ENCODE measurements at regions of chrX and their contacts with region 1.

Region 1: DNA sequence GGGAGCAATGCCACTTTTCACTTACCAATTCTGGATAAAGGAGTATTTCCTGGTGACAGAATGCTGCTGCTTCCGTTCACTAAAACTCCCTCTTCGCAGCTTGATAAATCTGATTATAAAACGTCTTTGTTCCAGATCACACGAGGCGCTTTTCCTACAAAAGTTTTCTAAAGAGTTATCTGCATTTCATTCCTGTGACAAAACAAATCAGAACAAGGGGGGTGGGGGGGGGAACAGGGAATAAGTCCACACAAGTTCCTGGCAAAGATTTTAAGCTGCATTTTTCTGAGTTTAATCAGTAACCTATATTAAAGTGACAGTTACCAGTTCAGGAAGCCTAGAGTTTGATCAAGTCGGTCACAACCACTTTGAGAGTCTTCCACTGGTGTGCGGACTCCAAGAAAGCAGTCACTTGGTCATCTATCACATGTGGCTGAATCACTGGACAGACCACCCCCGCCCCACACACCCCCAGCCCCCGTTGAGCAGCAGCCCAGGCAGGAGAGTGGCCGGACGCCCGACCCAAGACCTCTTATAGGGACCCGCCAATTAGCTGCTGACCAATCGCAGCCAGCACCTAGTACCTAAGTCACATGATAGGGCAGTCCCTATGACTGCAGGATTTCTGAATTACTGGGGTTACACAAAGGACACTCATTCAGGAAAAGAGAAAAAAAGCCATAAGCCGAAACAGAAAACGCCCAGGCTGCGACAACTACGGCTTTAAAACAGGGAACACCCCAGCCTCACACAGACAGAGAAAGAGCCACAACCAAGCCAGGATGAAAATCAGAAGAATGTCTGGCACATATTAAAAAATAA is 569.3 kb upstream of the DIPK2B start:
- DNase-seq: peak in 3 of 9 donors; percentile 13 to 64 (median 21)
- ATAC-seq: peak; percentile 79
- H3K4me3 ChIP-seq: peak overlapping the region; percentile 71
- H3K4me3 Mint-ChIP-seq: peak overlapping the region; percentile 76 to 95 (median 90)
- H3K27ac ChIP-seq: peak overlapping the region; percentile 76
- H3K27ac Mint-ChIP-seq: peak overlapping the region; percentile 90 to 97 (median 94)
- H3K4me1 ChIP-seq: peaks cover 11 to 45% of the 10 kb centered on the region in 2 donors
- H3K4me1 Mint-ChIP-seq: peaks cover 16 to 68% (median 55%) of the 10 kb centered on the region in 7 donors
- H3K27me3 ChIP-seq: no peaks in the 10 kb centered on the region
- H3K27me3 Mint-ChIP-seq: no peaks in the 10 kb centered on the region

Region 2: DNA sequence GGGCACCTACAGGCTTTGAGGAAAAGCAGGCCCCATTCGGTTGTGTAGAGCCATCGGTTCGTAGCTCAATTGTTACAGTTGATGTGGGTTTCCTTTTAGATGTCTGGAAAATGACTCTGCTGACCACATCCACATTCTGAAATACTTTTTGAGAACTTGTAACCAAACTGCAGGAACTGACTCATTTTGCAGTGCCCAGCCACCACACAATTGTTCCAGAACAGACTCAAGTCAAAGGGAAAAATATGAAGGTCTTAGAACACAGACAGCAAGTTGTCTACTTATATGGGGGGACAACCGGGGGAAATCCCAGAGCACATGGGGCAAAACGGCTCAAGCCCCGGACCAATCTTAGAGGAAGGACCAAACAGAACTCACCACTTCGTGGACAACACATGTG is 11.7 kb before region 1 on chrX:
- CTCF ChIA-PET with region 1: interaction called, 5 read pairs
- POLR2A ChIA-PET with region 1: interaction called, 47 read pairs
- intact Hi-C with region 1: loop called (anchors 1 kb)
- DNase-seq: peak in 2 of 9 donors; percentile 9 to 40
- ATAC-seq: peak; percentile 47
- H3K4me3 ChIP-seq: peak overlapping the region; percentile 29
- H3K4me3 Mint-ChIP-seq: peak overlapping the region in 9 of 10 donors; percentile 62 to 84 (median 70)
- H3K27ac ChIP-seq: peak overlapping the region; percentile 31
- H3K27ac Mint-ChIP-seq: peak overlapping the region in 8 of 9 donors; percentile 49 to 93 (median 72)
- H3K4me1 ChIP-seq: peaks cover 31 to 67% of the 10 kb centered on the region in 2 donors
- H3K4me1 Mint-ChIP-seq: peaks cover 28 to 67% (median 45%) of the 10 kb centered on the region in 7 donors
- H3K27me3 ChIP-seq: no peaks in the 10 kb centered on the region
- H3K27me3 Mint-ChIP-seq: no peaks in the 10 kb centered on the region

Region 3: GRCh38 chrX:45781901-45782553 is 12.1 kb after region 1 on chrX:
- CTCF ChIA-PET with region 1: no interaction called
- POLR2A ChIA-PET with region 1: no interaction called
- intact Hi-C with region 1: loop called (anchors 1 to 2 kb)
- DNase-seq: no peak
- ATAC-seq: peak; percentile 37
- H3K4me3 ChIP-seq: no peak overlapping the region
- H3K4me3 Mint-ChIP-seq: no peak overlapping the region
- H3K27ac ChIP-seq: no peak overlapping the region
- H3K27ac Mint-ChIP-seq: peak overlapping the region in 1 of 9 donors; percentile 62
- H3K4me1 ChIP-seq: no peaks in the 10 kb centered on the region
- H3K4me1 Mint-ChIP-seq: peaks cover 0 to 73% (median 4%) of the 10 kb centered on the region in 7 donors
- H3K27me3 ChIP-seq: no peaks in the 10 kb centered on the region
- H3K27me3 Mint-ChIP-seq: no peaks in the 10 kb centered on the region

Region 4: DNA sequence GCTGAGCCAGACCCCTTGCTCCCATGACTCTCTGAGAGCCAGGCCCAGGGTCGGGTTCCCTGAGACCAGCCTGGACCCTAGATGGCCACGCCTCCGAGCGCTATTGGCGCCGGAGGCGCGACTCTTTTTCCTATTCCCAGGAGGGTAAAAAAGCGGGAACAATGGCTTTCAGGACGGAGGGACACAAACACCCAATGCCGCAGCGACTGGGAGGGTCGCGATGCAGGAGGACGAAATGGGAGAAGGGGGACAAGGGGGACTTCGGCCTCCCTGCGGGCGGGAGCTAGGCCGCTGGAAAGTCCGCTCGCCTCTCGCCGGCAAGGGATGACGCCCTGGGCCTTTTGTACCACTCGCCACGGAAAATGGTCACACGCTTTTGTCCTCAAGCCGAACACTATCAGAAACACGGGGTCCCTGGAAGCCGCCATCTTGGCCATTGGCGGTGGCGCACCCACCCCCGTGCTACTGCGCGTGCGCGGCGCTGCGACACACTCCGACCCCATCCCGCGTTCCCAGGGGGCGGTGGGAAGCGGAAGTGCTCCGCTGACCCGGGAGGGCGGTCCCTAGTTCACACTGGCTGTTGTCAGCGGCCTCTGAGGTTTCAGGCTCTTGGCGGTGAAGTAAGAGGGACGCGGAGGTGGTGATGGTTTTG is 676.9 kb after region 1 on chrX:
- CTCF ChIA-PET with region 1: no interaction called
- POLR2A ChIA-PET with region 1: no interaction called
- intact Hi-C with region 1: no loop called
- DNase-seq: peak; percentile 75 to 86 (median 81)
- ATAC-seq: peak; percentile 94
- H3K4me3 ChIP-seq: peak overlapping the region; percentile 83
- H3K4me3 Mint-ChIP-seq: peak overlapping the region; percentile 77 to 91 (median 85)
- H3K27ac ChIP-seq: peak overlapping the region; percentile 86
- H3K27ac Mint-ChIP-seq: peak overlapping the region; percentile 79 to 92 (median 90)
- H3K4me1 ChIP-seq: peaks cover 5 to 7% of the 10 kb centered on the region in 2 donors
- H3K4me1 Mint-ChIP-seq: peaks cover 0 to 29% (median 20%) of the 10 kb centered on the region in 7 donors
- H3K27me3 ChIP-seq: no peaks in the 10 kb centered on the region
- H3K27me3 Mint-ChIP-seq: no peaks in the 10 kb centered on the region

Measured in naive thymus-derived CD4-positive, alpha-beta T cell (primary cell).